ENCODE measurements at regions of chr11 and their contacts with region 1.

Region 1: GRCh38 chr11:134476435-134477021 is 64.5 kb upstream of the B3GAT1 start:
- DNase-seq: peak; percentile 48
- H3K4me3 ChIP-seq: no peak overlapping the region
- H3K27ac ChIP-seq: no peak overlapping the region
- H3K4me1 ChIP-seq: no peaks in the 10 kb centered on the region
- H3K27me3 ChIP-seq: peaks cover 40% of the 10 kb centered on the region
- CTCF ChIP-seq: no peak

Region 2: DNA sequence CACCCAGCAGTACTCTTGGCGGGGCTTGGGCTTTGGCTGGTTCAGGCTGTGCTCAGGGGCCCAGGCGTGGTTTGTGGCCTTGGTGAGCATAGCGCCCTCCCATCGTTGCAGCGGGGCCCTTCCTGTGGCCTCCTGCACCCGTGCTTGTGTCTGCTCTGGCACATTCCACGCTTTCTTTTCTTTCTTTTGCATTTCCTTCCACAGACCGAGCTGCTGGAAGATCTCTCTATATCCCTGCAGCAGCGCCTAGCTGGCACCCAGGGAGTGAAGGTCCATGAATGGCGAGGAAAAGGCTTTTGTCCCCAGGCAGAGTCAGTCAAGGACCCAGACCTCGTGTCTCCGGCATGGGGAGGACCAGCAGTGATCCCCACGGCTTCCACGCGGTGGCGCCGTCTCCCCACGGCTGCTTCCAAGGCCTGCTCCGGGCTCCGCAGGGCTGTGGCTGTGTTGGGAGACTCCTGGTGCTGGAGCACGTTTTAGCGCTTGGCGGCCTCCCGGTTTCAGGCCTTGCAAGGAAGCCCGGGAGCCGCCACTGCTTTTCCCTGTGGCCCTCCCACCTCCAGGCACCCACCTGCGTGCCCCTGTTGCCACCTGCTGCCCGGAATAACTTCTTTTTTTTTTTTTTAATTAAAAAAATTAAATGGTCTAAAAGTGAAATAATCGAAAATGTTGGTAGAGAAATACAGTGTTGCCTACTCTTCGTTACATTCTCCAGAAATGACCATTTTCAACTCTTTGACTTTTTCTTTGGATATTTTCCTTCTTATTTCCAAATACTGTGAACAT is 116.3 kb before region 1 on chr11:
- CTCF ChIA-PET with region 1: no interaction called
- POLR2A ChIA-PET with region 1: no interaction called
- intact Hi-C with region 1: loop called (anchors 5 kb)
- DNase-seq: peak; percentile 90
- H3K4me3 ChIP-seq: no peak overlapping the region
- H3K27ac ChIP-seq: no peak overlapping the region
- H3K4me1 ChIP-seq: no peaks in the 10 kb centered on the region
- H3K27me3 ChIP-seq: no peaks in the 10 kb centered on the region
- CTCF ChIP-seq: peak; percentile 97